ENCODE measurements at regions of chr1 and their contacts with region 1.

Region 1: GRCh38 chr1:45521398-45522323 is at the start of gene PRDX1:
- DNase-seq: peak; percentile 87 to 97 (median 93)
- ATAC-seq: peak; percentile 86 to 87
- H3K4me3 Mint-ChIP-seq: peak within 1 kb of the TSS; percentile 88 to 97 (median 95)
- H3K27ac Mint-ChIP-seq: peak within 1 kb of the TSS; percentile 88 to 96 (median 92)
- H3K4me1 Mint-ChIP-seq: peaks cover 13 to 40% (median 34%) of the 10 kb centered on the region in 4 donors
- H3K27me3 Mint-ChIP-seq: no peaks in the 10 kb centered on the region
- polyA plus RNA-seq, gene PRDX1: 174 to 214 (median 205) TPM

Region 2: DNA sequence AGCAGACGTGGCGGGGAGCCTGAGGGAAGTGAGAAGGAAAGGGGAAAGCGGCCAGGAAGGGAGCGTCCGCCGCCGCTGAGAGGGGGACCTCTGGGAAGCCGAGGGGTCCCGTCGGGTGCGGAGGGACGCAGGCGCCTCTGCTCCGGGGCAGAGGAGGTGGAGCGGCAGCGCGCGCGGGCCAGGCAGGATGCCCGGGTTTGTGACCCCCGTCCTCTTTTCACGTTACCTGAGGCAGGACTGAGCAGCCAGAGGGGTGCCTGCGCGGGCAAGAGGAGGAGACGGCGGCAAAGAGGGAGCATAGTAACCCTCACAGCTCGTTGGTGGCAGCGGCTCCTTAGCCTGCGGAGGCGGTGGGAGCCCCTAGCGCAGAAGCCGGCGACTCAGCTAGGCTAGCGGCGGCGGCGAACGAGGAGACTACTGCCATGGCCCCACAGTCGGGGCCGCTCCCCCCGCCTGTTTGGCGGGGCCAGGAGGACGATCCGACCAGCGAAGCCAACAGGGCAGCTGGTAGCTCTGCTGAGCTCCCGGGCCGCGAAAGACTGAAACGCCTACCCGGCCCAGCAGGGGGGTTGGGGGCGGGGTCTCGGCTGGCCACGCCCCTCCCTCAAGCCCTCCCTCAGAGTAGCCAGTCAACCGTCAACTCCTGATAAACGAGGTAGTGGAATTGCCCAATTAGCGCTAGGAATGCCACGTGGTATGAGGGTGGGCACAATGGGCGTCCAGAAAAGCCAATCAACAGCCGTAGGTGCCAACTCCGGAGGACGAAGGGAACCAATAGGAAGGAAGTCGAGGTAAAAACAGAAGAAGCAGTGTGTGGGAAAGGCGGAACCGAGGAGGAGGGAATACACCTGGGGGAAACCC is 30.8 kb before region 1 on chr1 and contains the start of gene TESK2:
- POLR2A ChIA-PET with region 1: interaction called, 29 read pairs
- DNase-seq: peak; percentile 94 to 98 (median 97)
- ATAC-seq: peak; percentile 91 to 94
- H3K4me3 Mint-ChIP-seq: no peak within 1 kb of the TSS
- H3K27ac Mint-ChIP-seq: no peak within 1 kb of the TSS
- H3K4me1 Mint-ChIP-seq: peaks cover 6 to 13% (median 12%) of the 10 kb centered on the region in 4 donors
- H3K27me3 Mint-ChIP-seq: no peaks in the 10 kb centered on the region
- polyA plus RNA-seq, gene TESK2: 2.3 to 3.1 (median 2.7) TPM

Region 3: GRCh38 chr1:45543581-45544417 is 22.1 kb after region 1 on chr1:
- POLR2A ChIA-PET with region 1: interaction called, 14 read pairs
- DNase-seq: peak; percentile 49 to 81 (median 68)
- ATAC-seq: peak; percentile 97 to 99
- H3K4me3 Mint-ChIP-seq: peak overlapping the region; percentile 0 to 79 (median 67)
- H3K27ac Mint-ChIP-seq: peak overlapping the region; percentile 34 to 94 (median 75)
- H3K4me1 Mint-ChIP-seq: peaks cover 10 to 38% (median 23%) of the 10 kb centered on the region in 4 donors
- H3K27me3 Mint-ChIP-seq: no peaks in the 10 kb centered on the region

Region 4: GRCh38 chr1:45569962-45570581 is 48.4 kb after region 1 on chr1:
- POLR2A ChIA-PET with region 1: interaction called, 24 read pairs
- DNase-seq: peak; percentile 38 to 82 (median 65)
- ATAC-seq: peak; percentile 93 to 97
- H3K4me3 Mint-ChIP-seq: no peak overlapping the region
- H3K27ac Mint-ChIP-seq: peak overlapping the region in 5 of 10 donors; percentile 7 to 69 (median 39)
- H3K4me1 Mint-ChIP-seq: no peaks in the 10 kb centered on the region
- H3K27me3 Mint-ChIP-seq: no peaks in the 10 kb centered on the region

Region 5: DNA sequence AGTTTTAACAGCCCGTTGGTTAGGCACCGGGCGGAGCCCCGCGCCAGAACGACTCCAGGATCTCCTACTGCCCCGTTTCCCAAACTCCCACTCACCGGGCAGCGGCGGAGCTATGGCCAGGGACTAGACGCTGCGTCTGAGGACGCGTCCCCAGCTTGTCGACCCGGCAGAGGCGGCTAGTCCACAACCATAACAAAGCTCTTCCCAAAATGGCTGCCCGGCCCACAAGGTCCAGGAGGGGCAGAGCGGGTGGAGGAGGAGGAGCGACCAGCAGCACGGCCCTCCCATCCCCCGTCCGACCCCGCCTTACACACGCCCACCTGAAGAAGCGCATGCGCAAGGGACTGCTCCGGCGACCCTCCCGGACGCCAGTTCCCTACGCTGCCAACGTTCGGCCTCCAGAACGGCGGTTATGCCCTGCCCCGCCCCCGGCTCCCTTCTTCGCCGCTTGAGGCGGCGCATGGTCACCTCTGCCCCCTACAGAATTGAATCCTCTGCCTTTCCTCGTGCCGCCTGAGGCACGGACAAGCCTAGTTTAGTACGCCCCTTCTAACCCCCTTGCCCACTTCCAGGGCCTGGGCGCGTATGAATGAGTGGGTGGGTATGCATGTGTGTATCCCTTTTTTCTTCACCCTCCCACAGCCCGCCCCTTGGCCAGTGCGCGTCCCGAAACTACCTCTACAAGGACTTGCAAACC is 164.8 kb after region 1 on chr1 and contains the start of gene GPBP1L1:
- POLR2A ChIA-PET with region 1: interaction called, 11 read pairs
- DNase-seq: peak; percentile 94 to 98 (median 98)
- ATAC-seq: peak; percentile 72
- H3K4me3 Mint-ChIP-seq: peak within 1 kb of the TSS; percentile 93 to 100 (median 99)
- H3K27ac Mint-ChIP-seq: peak within 1 kb of the TSS; percentile 99 to 100 (median 99)
- H3K4me1 Mint-ChIP-seq: peaks cover 19 to 66% (median 58%) of the 10 kb centered on the region in 4 donors
- H3K27me3 Mint-ChIP-seq: no peaks in the 10 kb centered on the region
- polyA plus RNA-seq, gene GPBP1L1: 88.9 to 94.0 (median 92.1) TPM